Activated T-helper 1 cell treated with anti-CD3 and anti-CD28 coated beads, Interleukin-12 subunit alpha, Interleukin-12 subunit beta, Interleukin-2, Interleukin-4 antibody, amounts not matched to agents 30 ng/mL and 10 ng/mL and 1 ng/mL, durations not matched to agents 14 hours and 24 hours and 36 hours (primary cell): ENCODE measurements at regions of chr15 and their contacts with region 1.

Region 1: DNA sequence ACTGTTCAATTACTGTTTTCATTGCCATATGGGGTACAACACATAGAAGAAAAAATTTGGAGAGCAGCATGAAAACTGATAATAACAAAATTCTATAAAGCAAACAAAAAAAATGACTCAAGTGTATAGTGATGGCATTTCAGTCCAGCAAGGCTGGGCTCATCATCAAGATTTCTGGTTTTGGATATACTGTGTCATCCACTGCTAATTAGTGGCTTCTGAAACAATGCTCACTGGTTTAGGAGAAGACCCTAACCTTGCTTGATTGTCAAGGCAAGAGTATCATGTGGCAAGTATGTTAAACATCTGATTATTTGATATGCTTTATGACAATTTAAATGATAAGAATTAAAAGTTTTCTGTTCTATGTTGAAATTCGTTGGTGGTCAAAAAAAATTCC is 96.9 kb downstream of the RFX7 start:
- DNase-seq: no peak
- H3K4me3 Mint-ChIP-seq: no peak overlapping the region
- H3K27ac Mint-ChIP-seq: no peak overlapping the region
- H3K4me1 Mint-ChIP-seq: peaks cover 15% of the 10 kb centered on the region
- H3K27me3 Mint-ChIP-seq: no peaks in the 10 kb centered on the region

Region 2: DNA sequence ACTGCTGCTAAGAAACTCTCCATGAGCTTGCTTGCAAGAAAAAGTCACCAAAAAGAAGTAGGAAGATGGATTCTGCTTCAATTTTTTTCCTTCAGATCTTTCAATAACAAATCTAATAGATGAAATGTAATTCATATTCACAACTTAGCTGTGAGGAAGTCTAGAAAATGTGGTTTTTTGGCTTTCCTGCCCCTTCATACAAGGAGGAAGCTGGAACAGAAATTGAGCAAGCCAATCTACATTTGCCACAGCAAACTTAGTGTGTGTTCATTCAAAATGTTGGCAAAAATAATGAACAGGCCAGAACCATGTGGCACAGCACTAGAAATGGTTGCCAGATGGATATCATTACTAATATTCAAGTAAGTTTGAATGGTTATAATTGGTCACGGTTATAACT is 60.2 kb before region 1 on chr15:
- intact Hi-C with region 1: no loop called
- DNase-seq: no peak
- H3K4me3 Mint-ChIP-seq: no peak overlapping the region
- H3K27ac Mint-ChIP-seq: no peak overlapping the region
- H3K4me1 Mint-ChIP-seq: peaks cover 13% of the 10 kb centered on the region
- H3K27me3 Mint-ChIP-seq: peaks cover 2% of the 10 kb centered on the region

Region 3: DNA sequence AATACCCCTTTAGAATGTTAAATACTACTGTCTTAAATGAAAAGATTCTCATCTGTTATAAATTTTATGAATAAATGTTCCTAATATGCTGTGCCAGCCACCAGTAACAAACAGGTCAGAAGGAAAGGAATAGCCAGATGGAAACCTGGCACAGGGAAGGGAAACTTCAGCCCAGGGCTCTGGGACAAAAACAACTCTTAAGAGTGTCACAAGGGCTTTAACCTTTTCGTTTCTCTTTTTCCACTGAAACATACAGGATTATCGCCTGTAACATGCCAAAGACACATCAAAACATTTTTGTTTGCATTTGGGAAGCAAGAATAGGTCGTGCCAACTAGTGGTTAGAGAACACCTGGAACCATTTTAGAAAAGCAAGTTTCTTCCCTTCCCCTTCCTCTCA is 44.3 kb before region 1 on chr15:
- intact Hi-C with region 1: loop called (anchors 10 kb)
- DNase-seq: no peak
- H3K4me3 Mint-ChIP-seq: no peak overlapping the region
- H3K27ac Mint-ChIP-seq: no peak overlapping the region
- H3K4me1 Mint-ChIP-seq: no peaks in the 10 kb centered on the region
- H3K27me3 Mint-ChIP-seq: no peaks in the 10 kb centered on the region

Region 4: DNA sequence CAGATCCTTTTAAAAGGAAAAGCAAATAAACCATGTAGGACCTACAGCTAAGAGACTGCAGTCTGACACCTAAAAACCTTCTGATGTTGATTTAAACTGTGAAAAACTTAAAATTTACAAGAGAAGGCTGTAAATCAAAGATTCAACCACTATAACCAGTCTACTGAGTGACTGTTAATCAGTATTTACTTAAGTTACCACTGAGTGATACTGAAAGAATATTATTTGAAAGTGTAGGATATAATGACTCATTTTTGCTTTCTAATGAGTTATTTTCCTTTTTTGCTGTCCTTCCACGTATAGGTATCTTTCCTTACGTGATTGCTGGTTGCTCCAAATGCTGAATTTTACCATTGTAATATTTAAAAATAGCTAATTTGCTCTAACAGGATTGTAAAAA is 52.3 kb after region 1 on chr15:
- intact Hi-C with region 1: loop called (anchors 5 kb)
- DNase-seq: no peak
- H3K4me3 Mint-ChIP-seq: no peak overlapping the region
- H3K27ac Mint-ChIP-seq: no peak overlapping the region
- H3K4me1 Mint-ChIP-seq: peaks cover 30% of the 10 kb centered on the region
- H3K27me3 Mint-ChIP-seq: no peaks in the 10 kb centered on the region

Region 5: GRCh38 chr15:56211960-56212550 is 65.3 kb after region 1 on chr15:
- intact Hi-C with region 1: no loop called
- DNase-seq: no peak
- H3K4me3 Mint-ChIP-seq: no peak overlapping the region
- H3K27ac Mint-ChIP-seq: peak overlapping the region; percentile 29
- H3K4me1 Mint-ChIP-seq: peaks cover 47% of the 10 kb centered on the region
- H3K27me3 Mint-ChIP-seq: no peaks in the 10 kb centered on the region